A673 (cell line): ENCODE measurements at regions of chr3 and their contacts with region 1.

Region 1: DNA sequence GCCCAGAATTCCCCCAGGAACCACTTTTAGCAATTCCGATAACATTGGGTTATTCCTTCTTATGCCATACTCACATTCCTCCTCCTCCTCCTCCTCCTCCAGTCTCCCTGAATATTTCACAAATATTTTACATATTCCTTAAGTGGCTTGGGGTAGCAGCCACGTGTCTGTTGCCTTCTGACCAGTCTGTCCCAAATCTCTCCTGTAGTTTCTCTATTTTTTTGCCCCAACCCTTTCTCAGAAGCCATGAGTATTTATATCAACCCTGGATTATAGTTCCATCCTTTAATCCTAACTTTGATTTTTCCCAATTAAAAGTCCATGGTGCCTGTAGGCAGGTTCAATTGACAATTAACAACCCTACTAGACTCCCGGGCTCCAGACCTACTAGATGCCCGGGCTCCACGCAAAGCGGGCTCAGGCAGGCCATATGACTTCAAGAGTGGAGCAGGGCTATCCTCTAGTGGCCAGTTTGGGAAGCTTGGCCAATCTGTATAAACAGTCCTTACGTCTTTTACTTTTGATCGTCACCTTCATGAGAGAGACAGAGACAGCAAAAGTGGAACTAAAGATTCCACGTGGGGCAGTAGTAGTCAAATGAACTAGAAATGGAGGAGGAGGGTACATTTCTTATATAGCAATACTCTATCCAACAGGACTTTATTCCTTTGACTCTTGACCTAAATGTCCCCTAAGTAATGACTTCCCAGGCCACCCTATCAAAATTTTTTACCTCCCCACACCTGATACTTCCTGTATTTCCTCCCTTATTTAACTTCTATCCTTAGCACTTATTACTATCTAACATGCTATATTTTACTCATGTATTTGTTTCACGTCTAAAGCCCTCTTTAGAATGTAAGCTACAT is 69.7 kb downstream of the USF3 start:
- DNase-seq: peak; percentile 78
- H3K4me3 ChIP-seq: no peak overlapping the region
- H3K27ac ChIP-seq: no peak overlapping the region
- H3K4me1 ChIP-seq: no peaks in the 10 kb centered on the region
- H3K27me3 ChIP-seq: no peaks in the 10 kb centered on the region
- CTCF ChIP-seq: peak; percentile 90

Region 2: DNA sequence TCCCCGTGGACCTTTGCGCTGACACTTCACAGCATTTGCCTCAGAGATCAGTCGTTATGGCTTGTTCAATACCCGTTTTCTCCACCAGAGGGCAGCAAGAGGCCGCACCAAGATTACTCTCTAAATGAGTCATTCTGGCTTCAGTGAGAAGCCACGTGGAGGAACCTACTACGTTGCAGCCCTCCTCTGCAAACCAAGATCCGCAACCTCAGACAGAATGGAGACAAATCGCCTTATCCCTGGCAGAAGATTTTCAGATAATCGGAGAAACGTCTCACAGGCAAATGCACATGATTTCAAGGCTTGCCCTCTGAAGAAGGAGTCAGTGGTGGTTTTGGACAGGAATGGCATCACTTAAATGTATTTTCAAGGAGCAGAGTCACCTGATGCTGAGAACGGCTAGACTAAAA is 575.4 kb before region 1 on chr3:
- CTCF ChIA-PET with region 1: no interaction called
- POLR2A ChIA-PET with region 1: no interaction called
- intact Hi-C with region 1: loop called (anchors 2 kb)
- DNase-seq: peak; percentile 87
- H3K4me3 ChIP-seq: no peak overlapping the region
- H3K27ac ChIP-seq: no peak overlapping the region
- H3K4me1 ChIP-seq: peaks cover 22% of the 10 kb centered on the region
- H3K27me3 ChIP-seq: peaks cover 15% of the 10 kb centered on the region
- CTCF ChIP-seq: peak; percentile 86

Region 3: DNA sequence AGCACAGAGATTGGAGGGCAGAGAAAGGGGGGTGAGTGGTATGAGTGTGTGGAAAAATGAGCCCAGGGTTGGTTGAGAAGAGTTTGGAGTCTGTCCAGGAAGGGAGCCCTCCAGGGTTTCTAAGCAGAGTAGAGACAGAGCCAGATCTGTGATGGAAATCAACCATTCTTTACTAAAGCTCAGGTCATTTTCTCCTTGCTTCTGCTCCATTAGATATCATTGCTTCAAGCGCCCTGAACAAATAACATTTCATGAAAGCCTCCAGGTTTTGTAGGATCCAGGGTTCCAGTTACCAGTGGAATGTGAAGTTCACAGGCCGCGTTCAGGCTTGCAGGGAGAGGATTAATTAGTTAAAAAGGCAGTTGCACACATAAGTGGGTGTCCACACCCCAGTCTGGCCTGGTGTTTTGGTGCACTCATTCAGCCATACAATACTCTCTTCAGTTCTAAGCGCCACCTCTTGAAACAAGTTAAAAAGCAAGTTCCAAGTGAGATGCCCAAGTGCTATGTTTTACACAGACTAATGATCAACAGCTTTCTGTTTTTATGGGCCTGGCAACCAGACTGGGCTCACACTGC is 431.8 kb before region 1 on chr3:
- CTCF ChIA-PET with region 1: interaction called, 13 read pairs
- POLR2A ChIA-PET with region 1: no interaction called
- intact Hi-C with region 1: no loop called
- DNase-seq: no peak
- H3K4me3 ChIP-seq: no peak overlapping the region
- H3K27ac ChIP-seq: no peak overlapping the region
- H3K4me1 ChIP-seq: peaks cover 21% of the 10 kb centered on the region
- H3K27me3 ChIP-seq: no peaks in the 10 kb centered on the region
- CTCF ChIP-seq: no peak

Region 4: GRCh38 chr3:113287803-113288648 is 338.7 kb before region 1 on chr3:
- CTCF ChIA-PET with region 1: interaction called, 3 read pairs
- POLR2A ChIA-PET with region 1: no interaction called
- intact Hi-C with region 1: loop called (anchors 5 kb)
- DNase-seq: peak; percentile 73
- H3K4me3 ChIP-seq: no peak overlapping the region
- H3K27ac ChIP-seq: no peak overlapping the region
- H3K4me1 ChIP-seq: peaks cover 10% of the 10 kb centered on the region
- H3K27me3 ChIP-seq: no peaks in the 10 kb centered on the region
- CTCF ChIP-seq: peak; percentile 96

Region 5: DNA sequence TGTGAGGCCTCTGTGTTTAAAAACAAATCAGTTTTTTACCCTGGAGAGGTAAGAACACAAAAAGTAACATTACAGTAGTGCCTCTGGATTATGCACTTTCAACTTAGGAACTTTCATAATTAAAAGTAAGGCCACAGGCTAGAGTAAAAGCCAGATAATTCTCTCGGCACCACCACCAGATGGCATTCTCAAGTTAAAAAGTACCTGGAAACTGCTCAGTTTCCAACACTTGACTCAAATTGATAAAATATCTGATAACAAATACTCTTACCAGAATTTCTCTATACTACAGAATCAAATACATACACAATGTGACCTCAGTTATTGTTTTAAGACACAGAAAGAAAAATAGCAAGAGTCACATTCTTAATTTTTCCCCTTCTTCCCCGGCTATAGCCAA is 131.7 kb before region 1 on chr3:
- CTCF ChIA-PET with region 1: no interaction called
- POLR2A ChIA-PET with region 1: no interaction called
- intact Hi-C with region 1: loop called (anchors 2 kb)
- DNase-seq: peak; percentile 46
- H3K4me3 ChIP-seq: no peak overlapping the region
- H3K27ac ChIP-seq: no peak overlapping the region
- H3K4me1 ChIP-seq: no peaks in the 10 kb centered on the region
- H3K27me3 ChIP-seq: no peaks in the 10 kb centered on the region
- CTCF ChIP-seq: peak; percentile 62

Region 6: GRCh38 chr3:113552851-113553250 is 73.9 kb before region 1 on chr3:
- CTCF ChIA-PET with region 1: no interaction called
- POLR2A ChIA-PET with region 1: no interaction called
- intact Hi-C with region 1: no loop called
- DNase-seq: no peak
- H3K4me3 ChIP-seq: no peak overlapping the region
- H3K27ac ChIP-seq: no peak overlapping the region
- H3K4me1 ChIP-seq: no peaks in the 10 kb centered on the region
- H3K27me3 ChIP-seq: no peaks in the 10 kb centered on the region
- CTCF ChIP-seq: peak; percentile 30; the same call in 1 of the 2 replicates